ENCODE measurements at regions of chr6 and their contacts with region 1.

Region 1: GRCh38 chr6:29809249-29809648 is 18.4 kb upstream of the HLA-G start:
- DNase-seq: no peak
- ATAC-seq: no peak
- H3K4me3 ChIP-seq: no peak overlapping the region
- H3K4me3 Mint-ChIP-seq: no peak overlapping the region
- H3K27ac ChIP-seq: no peak overlapping the region
- H3K27ac Mint-ChIP-seq: no peak overlapping the region
- H3K4me1 ChIP-seq: no peaks in the 10 kb centered on the region
- H3K4me1 Mint-ChIP-seq: no peaks in the 10 kb centered on the region
- H3K27me3 ChIP-seq: peaks cover 6 to 7% of the 10 kb centered on the region in 2 experiments
- H3K27me3 Mint-ChIP-seq: peaks cover 16% of the 10 kb centered on the region
- CTCF ChIP-seq: no peak

Region 2: DNA sequence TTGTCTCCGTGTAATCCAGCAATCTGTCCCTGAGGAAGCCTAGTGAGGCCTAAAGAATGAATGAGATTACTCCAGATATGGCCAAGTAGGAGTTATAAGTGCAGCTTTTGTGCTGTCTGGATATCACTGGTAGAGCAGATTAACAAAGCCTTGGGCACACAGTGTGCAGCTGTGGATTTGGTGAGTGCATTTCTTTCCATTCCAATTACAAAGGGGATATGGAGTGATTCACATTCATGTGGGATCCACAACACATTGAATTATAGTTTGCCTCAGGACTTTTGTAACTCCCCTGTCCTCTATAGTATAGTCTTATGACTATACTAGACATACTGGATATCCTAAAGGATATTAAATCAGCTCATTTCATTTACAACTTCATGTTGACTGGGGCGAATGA is 38.9 kb before region 1 on chr6:
- CTCF ChIA-PET with region 1: no interaction called
- POLR2A ChIA-PET with region 1: no interaction called
- intact Hi-C with region 1: loop called in 1 of 2 experiments (anchors 5 kb)
- DNase-seq: no peak
- ATAC-seq: no peak
- H3K4me3 ChIP-seq: no peak overlapping the region
- H3K4me3 Mint-ChIP-seq: no peak overlapping the region
- H3K27ac ChIP-seq: no peak overlapping the region
- H3K27ac Mint-ChIP-seq: no peak overlapping the region
- H3K4me1 ChIP-seq: no peaks in the 10 kb centered on the region
- H3K4me1 Mint-ChIP-seq: no peaks in the 10 kb centered on the region
- H3K27me3 ChIP-seq: no peaks in the 10 kb centered on the region
- H3K27me3 Mint-ChIP-seq: peaks cover 32% of the 10 kb centered on the region
- CTCF ChIP-seq: no peak

Region 3: DNA sequence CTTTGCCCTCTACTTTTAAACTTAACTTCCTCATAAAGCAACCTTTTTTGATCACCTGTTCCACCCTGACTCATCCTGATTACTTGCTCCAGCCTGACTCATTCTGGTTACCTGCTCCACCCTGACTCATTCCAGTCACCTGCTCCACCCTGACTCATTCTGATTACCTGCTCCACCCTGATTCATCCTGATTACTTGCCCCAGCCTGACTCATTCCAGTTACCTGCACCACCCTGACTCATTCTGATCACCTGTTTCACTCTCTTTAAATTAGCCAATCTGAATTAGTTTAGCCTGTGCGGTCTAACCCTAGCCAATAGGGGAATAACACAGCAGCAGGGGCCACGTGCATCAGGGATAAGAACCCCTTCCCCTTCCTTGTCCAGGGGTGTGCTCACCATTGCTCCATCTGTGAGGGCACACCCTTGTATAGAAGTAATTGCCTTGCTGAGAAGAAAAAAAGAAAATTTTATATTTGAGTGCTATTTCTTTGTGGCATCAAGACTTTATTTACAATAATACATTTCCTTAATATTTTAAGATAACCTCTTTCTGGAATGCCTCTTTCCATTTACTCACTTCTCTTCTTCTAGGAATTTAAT is 36.3 kb after region 1 on chr6:
- CTCF ChIA-PET with region 1: no interaction called
- POLR2A ChIA-PET with region 1: no interaction called
- intact Hi-C with region 1: no loop called
- DNase-seq: peak in 1 of 9 experiments; percentile 35
- ATAC-seq: peak; percentile 39
- H3K4me3 ChIP-seq: no peak overlapping the region
- H3K4me3 Mint-ChIP-seq: no peak overlapping the region
- H3K27ac ChIP-seq: no peak overlapping the region
- H3K27ac Mint-ChIP-seq: no peak overlapping the region
- H3K4me1 ChIP-seq: peaks cover 3% of the 10 kb centered on the region
- H3K4me1 Mint-ChIP-seq: peaks cover 8% of the 10 kb centered on the region
- H3K27me3 ChIP-seq: peaks cover 11 to 21% of the 10 kb centered on the region in 2 experiments
- H3K27me3 Mint-ChIP-seq: peaks cover 39% of the 10 kb centered on the region
- CTCF ChIP-seq: no peak

Region 4: GRCh38 chr6:30212865-30213666 is 403.8 kb after region 1 on chr6 and contains the start of gene TRIM26:
- CTCF ChIA-PET with region 1: no interaction called
- POLR2A ChIA-PET with region 1: no interaction called
- intact Hi-C with region 1: no loop called
- DNase-seq: peak; percentile 92 to 98 (median 96)
- ATAC-seq: peak; percentile 86
- H3K4me3 ChIP-seq: peak within 1 kb of the TSS; percentile 76 to 99
- H3K4me3 Mint-ChIP-seq: peak within 1 kb of the TSS; percentile 99
- H3K27ac ChIP-seq: peak within 1 kb of the TSS; percentile 96
- H3K27ac Mint-ChIP-seq: peak within 1 kb of the TSS; percentile 99
- H3K4me1 ChIP-seq: peaks cover 33% of the 10 kb centered on the region
- H3K4me1 Mint-ChIP-seq: peaks cover 63% of the 10 kb centered on the region
- H3K27me3 ChIP-seq: no peaks in the 10 kb centered on the region
- H3K27me3 Mint-ChIP-seq: no peaks in the 10 kb centered on the region
- CTCF ChIP-seq: no peak
- total RNA-seq, gene TRIM26: 54.8 to 56.8 TPM

Measured in CD8-positive, alpha-beta T cell (primary cell).